ENCODE measurements at regions of chr9 and their contacts with region 1.

Region 1: GRCh38 chr9:101530077-101530711 is 3.5 kb upstream of the RNF20 start:
- DNase-seq: peak; percentile 73
- ATAC-seq: peak; percentile 43
- H3K4me3 Mint-ChIP-seq: no peak overlapping the region
- H3K27ac Mint-ChIP-seq: no peak overlapping the region
- H3K4me1 Mint-ChIP-seq: peaks cover 12% of the 10 kb centered on the region
- H3K27me3 Mint-ChIP-seq: no peaks in the 10 kb centered on the region
- CTCF ChIP-seq: peak; percentile 61

Region 2: GRCh38 chr9:101486693-101487442 is 43.3 kb before region 1 on chr9:
- CTCF ChIA-PET with region 1: interaction called, 19 read pairs
- POLR2A ChIA-PET with region 1: interaction called, 10 read pairs
- DNase-seq: peak; percentile 82
- ATAC-seq: peak; percentile 92
- H3K4me3 Mint-ChIP-seq: peak overlapping the region; percentile 90
- H3K27ac Mint-ChIP-seq: peak overlapping the region; percentile 89
- H3K4me1 Mint-ChIP-seq: peaks cover 22% of the 10 kb centered on the region
- H3K27me3 Mint-ChIP-seq: peaks cover 6% of the 10 kb centered on the region
- CTCF ChIP-seq: no peak

Region 3: GRCh38 chr9:101543098-101543735 is 13.0 kb after region 1 on chr9:
- CTCF ChIA-PET with region 1: no interaction called
- POLR2A ChIA-PET with region 1: no interaction called
- DNase-seq: no peak
- ATAC-seq: no peak
- H3K4me3 Mint-ChIP-seq: no peak overlapping the region
- H3K27ac Mint-ChIP-seq: no peak overlapping the region
- H3K4me1 Mint-ChIP-seq: peaks cover 3% of the 10 kb centered on the region; the same call in 1 of the 2 replicates
- H3K27me3 Mint-ChIP-seq: no peaks in the 10 kb centered on the region
- CTCF ChIP-seq: no peak